Dorsolateral prefrontal cortex (tissue), 120 donors: ENCODE measurements at regions of chr1 and their contacts with region 1.

Region 1: GRCh38 chr1:78145105-78145580 is 99.4 kb downstream of the GIPC2 start:
- DNase-seq: peak in 8 of 10 donors; percentile 18 to 61 (median 56)
- H3K4me3 ChIP-seq: no peak overlapping the region
- H3K27ac ChIP-seq: no peak overlapping the region
- H3K27me3 ChIP-seq: peaks cover 0 to 8% (median 0%) of the 10 kb centered on the region in 45 donors
- CTCF ChIP-seq: peak; percentile 66 to 91 (median 84)

Region 2: GRCh38 chr1:78607334-78607927 is 462.3 kb after region 1 on chr1:
- intact Hi-C with region 1: loop called in 1 of 2 experiments (anchors 5 kb)
- DNase-seq: no peak
- H3K4me3 ChIP-seq: no peak overlapping the region
- H3K27ac ChIP-seq: no peak overlapping the region
- H3K27me3 ChIP-seq: peaks cover 0 to 7% (median 0%) of the 10 kb centered on the region in 45 donors
- CTCF ChIP-seq: peak; percentile 42 to 81 (median 66)

Region 3: GRCh38 chr1:78617615-78618026 is 472.5 kb after region 1 on chr1:
- intact Hi-C with region 1: loop called in 1 of 2 experiments (anchors 5 kb)
- DNase-seq: peak in 9 of 10 donors; percentile 11 to 72 (median 59)
- H3K4me3 ChIP-seq: peak overlapping the region in 30 of 59 donors; percentile 1 to 56 (median 20)
- H3K27ac ChIP-seq: peak overlapping the region in 6 of 59 donors; percentile 6 to 80 (median 27)
- H3K27me3 ChIP-seq: no peaks in the 10 kb centered on the region
- CTCF ChIP-seq: peak; percentile 78 to 98 (median 90)

Region 4: GRCh38 chr1:78676347-78676982 is 531.3 kb after region 1 on chr1:
- intact Hi-C with region 1: loop called (anchors 5 to 10 kb)
- DNase-seq: peak in 3 of 10 donors; percentile 9 to 62 (median 20)
- H3K4me3 ChIP-seq: peak overlapping the region in 4 of 59 donors; percentile 5 to 42 (median 26)
- H3K27ac ChIP-seq: no peak overlapping the region
- H3K27me3 ChIP-seq: no peaks in the 10 kb centered on the region
- CTCF ChIP-seq: peak; percentile 75 to 98 (median 92)